ENCODE measurements at regions of chr3 and their contacts with region 1.

Region 1: GRCh38 chr3:69306239-69307185 is 79.4 kb downstream of the FRMD4B start:
- DNase-seq: peak; percentile 73 to 87 (median 85)
- H3K4me3 ChIP-seq: no peak overlapping the region
- H3K27ac ChIP-seq: no peak overlapping the region
- H3K4me1 ChIP-seq: peaks cover 0 to 3% (median 0%) of the 10 kb centered on the region in 4 experiments
- H3K27me3 ChIP-seq: no peaks in the 10 kb centered on the region

Region 2: DNA sequence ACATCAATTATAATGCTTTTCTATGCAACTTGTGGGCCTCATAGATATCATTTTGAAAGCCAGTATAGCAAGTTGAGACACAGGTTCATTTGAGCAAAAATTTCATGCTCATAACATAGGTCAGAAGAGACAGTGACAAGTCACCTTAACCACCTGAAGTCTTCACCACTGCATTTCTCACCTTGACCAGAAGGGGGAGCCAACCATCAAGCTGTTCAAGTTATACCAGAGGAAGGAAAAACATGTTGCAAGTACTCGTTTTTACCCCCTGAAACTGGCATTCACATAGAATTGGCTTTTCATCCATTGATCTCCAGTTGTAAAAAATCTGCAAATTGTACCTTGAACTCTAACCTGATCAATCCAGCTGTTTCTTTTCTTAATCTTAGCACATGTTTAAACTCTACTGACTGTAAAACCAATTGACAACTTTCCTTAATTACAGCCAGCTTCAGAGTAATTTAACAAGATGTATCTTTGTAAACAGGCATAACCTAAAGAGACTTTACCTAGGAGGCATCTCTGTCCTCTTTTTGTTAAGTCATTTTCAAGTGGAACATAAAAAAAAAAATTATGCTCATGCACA is 185.5 kb before region 1 on chr3:
- CTCF ChIA-PET with region 1: interaction called, 14 read pairs
- POLR2A ChIA-PET with region 1: no interaction called
- DNase-seq: peak; percentile 83 to 91 (median 87)
- H3K4me3 ChIP-seq: no peak overlapping the region
- H3K27ac ChIP-seq: no peak overlapping the region
- H3K4me1 ChIP-seq: no peaks in the 10 kb centered on the region
- H3K27me3 ChIP-seq: no peaks in the 10 kb centered on the region

Region 3: GRCh38 chr3:69294014-69294775 is 12.3 kb before region 1 on chr3:
- CTCF ChIA-PET with region 1: interaction called, 17 read pairs
- POLR2A ChIA-PET with region 1: no interaction called
- DNase-seq: no peak
- H3K4me3 ChIP-seq: no peak overlapping the region
- H3K27ac ChIP-seq: no peak overlapping the region
- H3K4me1 ChIP-seq: peaks cover 0 to 5% (median 0%) of the 10 kb centered on the region in 4 experiments
- H3K27me3 ChIP-seq: no peaks in the 10 kb centered on the region

Measured in common myeloid progenitor, CD34-positive (primary cell).